CD8-positive, alpha-beta T cell (primary cell): ENCODE measurements at regions of chr14 and their contacts with region 1.

Region 1: GRCh38 chr14:106347890-106348755 is 821.7 kb downstream of the TMEM121 start:
- DNase-seq: no peak
- ATAC-seq: no peak
- H3K4me3 ChIP-seq: no peak overlapping the region
- H3K4me3 Mint-ChIP-seq: no peak overlapping the region
- H3K27ac ChIP-seq: no peak overlapping the region
- H3K27ac Mint-ChIP-seq: no peak overlapping the region
- H3K4me1 ChIP-seq: no peaks in the 10 kb centered on the region
- H3K4me1 Mint-ChIP-seq: peaks cover 4% of the 10 kb centered on the region
- H3K27me3 ChIP-seq: no peaks in the 10 kb centered on the region
- H3K27me3 Mint-ChIP-seq: peaks cover 19% of the 10 kb centered on the region
- CTCF ChIP-seq: no peak

Region 2: DNA sequence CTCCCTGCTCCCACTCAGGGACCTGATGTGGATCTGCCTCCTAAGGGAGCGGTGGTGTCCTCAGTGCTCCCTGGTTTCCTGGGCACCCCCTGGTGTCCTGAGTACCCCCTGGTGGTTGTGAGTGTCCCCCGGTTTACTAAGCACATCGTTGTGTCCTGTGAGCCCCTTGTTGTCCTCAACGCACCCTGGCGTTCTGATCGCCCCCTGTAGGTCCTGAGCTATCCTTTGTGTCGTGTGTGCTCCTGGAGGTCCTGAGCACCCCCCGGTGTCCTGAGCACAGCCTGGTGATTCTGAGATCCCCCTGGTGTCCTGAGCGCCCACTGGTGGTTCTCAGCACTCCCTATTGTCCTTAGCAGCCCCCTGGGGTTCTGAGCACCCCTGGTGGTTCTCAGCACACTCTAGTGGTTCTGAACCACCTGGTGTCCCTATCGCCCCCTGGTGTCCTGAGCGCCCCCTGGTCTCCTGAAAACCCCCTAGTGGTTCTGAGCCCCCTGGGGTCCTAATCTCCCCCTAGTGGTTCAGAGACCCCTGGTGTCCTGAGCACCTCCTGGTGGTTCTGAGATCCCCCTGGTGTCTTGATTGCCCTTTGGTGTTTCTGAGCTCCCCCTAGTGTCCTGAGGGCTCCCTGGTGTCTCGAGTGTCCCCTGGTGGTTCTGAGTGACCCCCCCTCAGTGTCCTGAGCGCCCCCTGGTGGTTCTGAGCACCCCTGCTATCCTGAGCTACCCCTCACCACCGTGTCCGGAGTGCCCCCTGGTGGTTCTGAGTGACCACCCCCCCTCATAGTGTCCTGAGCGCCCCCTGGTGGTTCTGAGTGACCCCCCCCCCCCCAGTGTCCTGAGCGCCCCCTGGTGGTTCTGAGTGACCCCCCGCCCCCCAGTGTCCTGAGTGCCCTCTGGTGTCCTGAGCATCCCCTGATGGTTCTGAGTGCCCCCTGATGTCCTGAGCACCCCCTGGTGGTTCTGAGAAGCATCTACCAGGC is 206.6 kb before region 1 on chr14:
- CTCF ChIA-PET with region 1: no interaction called
- POLR2A ChIA-PET with region 1: no interaction called
- intact Hi-C with region 1: no loop called
- DNase-seq: peak in 5 of 9 experiments; percentile 16 to 63 (median 52)
- ATAC-seq: no peak
- H3K4me3 ChIP-seq: no peak overlapping the region
- H3K4me3 Mint-ChIP-seq: no peak overlapping the region
- H3K27ac ChIP-seq: no peak overlapping the region
- H3K27ac Mint-ChIP-seq: no peak overlapping the region
- H3K4me1 ChIP-seq: peaks cover 4% of the 10 kb centered on the region
- H3K4me1 Mint-ChIP-seq: peaks cover 14% of the 10 kb centered on the region
- H3K27me3 ChIP-seq: no peaks in the 10 kb centered on the region
- H3K27me3 Mint-ChIP-seq: no peaks in the 10 kb centered on the region
- CTCF ChIP-seq: no peak

Region 3: GRCh38 chr14:106302661-106303060 is 45.5 kb before region 1 on chr14:
- CTCF ChIA-PET with region 1: no interaction called
- POLR2A ChIA-PET with region 1: no interaction called
- intact Hi-C with region 1: no loop called
- DNase-seq: no peak
- ATAC-seq: no peak
- H3K4me3 ChIP-seq: no peak overlapping the region
- H3K4me3 Mint-ChIP-seq: no peak overlapping the region
- H3K27ac ChIP-seq: no peak overlapping the region
- H3K27ac Mint-ChIP-seq: no peak overlapping the region
- H3K4me1 ChIP-seq: peaks cover 8% of the 10 kb centered on the region
- H3K4me1 Mint-ChIP-seq: peaks cover 12% of the 10 kb centered on the region
- H3K27me3 ChIP-seq: no peaks in the 10 kb centered on the region
- H3K27me3 Mint-ChIP-seq: peaks cover 6% of the 10 kb centered on the region
- CTCF ChIP-seq: no peak

Region 4: GRCh38 chr14:106327234-106327633 is 20.9 kb before region 1 on chr14:
- CTCF ChIA-PET with region 1: no interaction called
- POLR2A ChIA-PET with region 1: no interaction called
- intact Hi-C with region 1: loop called in 1 of 2 experiments (anchors 1 kb)
- DNase-seq: no peak
- ATAC-seq: no peak
- H3K4me3 ChIP-seq: no peak overlapping the region
- H3K4me3 Mint-ChIP-seq: no peak overlapping the region
- H3K27ac ChIP-seq: no peak overlapping the region
- H3K27ac Mint-ChIP-seq: no peak overlapping the region
- H3K4me1 ChIP-seq: no peaks in the 10 kb centered on the region
- H3K4me1 Mint-ChIP-seq: no peaks in the 10 kb centered on the region
- H3K27me3 ChIP-seq: peaks cover 0 to 6% of the 10 kb centered on the region in 2 experiments
- H3K27me3 Mint-ChIP-seq: peaks cover 23% of the 10 kb centered on the region
- CTCF ChIP-seq: no peak

Region 5: GRCh38 chr14:106372870-106373652 is 24.9 kb after region 1 on chr14:
- CTCF ChIA-PET with region 1: interaction called, 18 read pairs
- POLR2A ChIA-PET with region 1: interaction called, 4 read pairs
- intact Hi-C with region 1: loop called in 1 of 2 experiments (anchors 1 kb)
- DNase-seq: peak; percentile 50 to 85 (median 79)
- ATAC-seq: peak; percentile 94
- H3K4me3 ChIP-seq: no peak overlapping the region
- H3K4me3 Mint-ChIP-seq: peak overlapping the region; percentile 59
- H3K27ac ChIP-seq: no peak overlapping the region
- H3K27ac Mint-ChIP-seq: no peak overlapping the region
- H3K4me1 ChIP-seq: peaks cover 10% of the 10 kb centered on the region
- H3K4me1 Mint-ChIP-seq: peaks cover 16% of the 10 kb centered on the region
- H3K27me3 ChIP-seq: no peaks in the 10 kb centered on the region
- H3K27me3 Mint-ChIP-seq: no peaks in the 10 kb centered on the region
- CTCF ChIP-seq: peak; percentile 93